ENCODE measurements at regions of chr3 and their contacts with region 1.

Region 1: GRCh38 chr3:11271986-11272904 is at the start of gene ATG7:
- DNase-seq: peak; percentile 94 to 98 (median 97)
- ATAC-seq: peak; percentile 98
- H3K4me3 ChIP-seq: peak within 1 kb of the TSS; percentile 77 to 96
- H3K4me3 Mint-ChIP-seq: peak within 1 kb of the TSS; percentile 96
- H3K27ac ChIP-seq: peak within 1 kb of the TSS; percentile 94 to 97
- H3K27ac Mint-ChIP-seq: peak within 1 kb of the TSS; percentile 99
- H3K4me1 ChIP-seq: peaks cover 23% of the 10 kb centered on the region
- H3K4me1 Mint-ChIP-seq: peaks cover 52% of the 10 kb centered on the region
- H3K27me3 ChIP-seq: no peaks in the 10 kb centered on the region
- H3K27me3 Mint-ChIP-seq: no peaks in the 10 kb centered on the region
- CTCF ChIP-seq: no peak
- total RNA-seq, gene ATG7: 21.3 to 23.8 TPM

Region 2: DNA sequence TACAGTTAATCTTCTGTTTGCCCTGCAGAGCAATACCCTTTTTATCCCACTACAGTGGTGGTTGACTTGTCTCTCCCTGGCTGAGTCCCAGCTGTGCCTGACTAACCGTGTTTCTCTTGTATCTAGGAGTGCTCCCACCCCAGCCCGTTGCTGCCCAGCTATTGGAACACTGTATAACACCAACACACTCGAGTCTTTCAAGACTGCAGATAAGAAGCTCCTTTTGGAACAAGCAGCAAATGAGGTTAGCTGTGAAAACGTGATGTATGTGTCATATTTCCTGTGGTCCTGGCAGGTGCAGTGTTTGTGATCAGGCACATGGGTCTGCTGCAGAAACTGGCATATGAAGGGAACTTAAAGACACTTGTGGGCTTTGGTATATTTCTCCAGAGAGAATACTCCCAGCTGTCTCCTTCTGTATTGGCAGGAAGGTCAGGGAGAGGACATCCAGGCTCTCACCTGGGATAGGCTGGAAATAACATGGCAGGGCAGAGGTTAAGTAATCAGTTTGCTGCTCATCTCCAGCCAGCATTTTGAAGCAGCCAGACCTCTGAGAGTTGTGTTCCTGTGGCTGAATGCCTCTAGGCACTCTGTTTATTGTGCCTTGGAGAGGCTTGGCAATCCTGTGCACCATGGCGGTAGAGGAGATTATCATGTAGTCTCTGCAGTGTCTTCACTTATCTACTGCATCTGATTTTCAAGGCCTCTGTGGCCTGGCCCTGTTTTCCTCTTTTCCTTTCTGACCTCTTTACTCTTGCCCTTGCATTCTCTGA is 34.8 kb after region 1 on chr3:
- CTCF ChIA-PET with region 1: no interaction called
- POLR2A ChIA-PET with region 1: interaction called, 10 read pairs
- intact Hi-C with region 1: loop called in 1 of 2 experiments (anchors 1 kb)
- DNase-seq: peak in 7 of 9 experiments; percentile 16 to 72 (median 41)
- ATAC-seq: peak; percentile 80
- H3K4me3 ChIP-seq: no peak overlapping the region
- H3K4me3 Mint-ChIP-seq: no peak overlapping the region
- H3K27ac ChIP-seq: peak overlapping the region in 1 of 2 experiments; percentile 55
- H3K27ac Mint-ChIP-seq: peak overlapping the region; percentile 66
- H3K4me1 ChIP-seq: peaks cover 7% of the 10 kb centered on the region
- H3K4me1 Mint-ChIP-seq: peaks cover 21% of the 10 kb centered on the region
- H3K27me3 ChIP-seq: no peaks in the 10 kb centered on the region
- H3K27me3 Mint-ChIP-seq: no peaks in the 10 kb centered on the region
- CTCF ChIP-seq: no peak

Region 3: DNA sequence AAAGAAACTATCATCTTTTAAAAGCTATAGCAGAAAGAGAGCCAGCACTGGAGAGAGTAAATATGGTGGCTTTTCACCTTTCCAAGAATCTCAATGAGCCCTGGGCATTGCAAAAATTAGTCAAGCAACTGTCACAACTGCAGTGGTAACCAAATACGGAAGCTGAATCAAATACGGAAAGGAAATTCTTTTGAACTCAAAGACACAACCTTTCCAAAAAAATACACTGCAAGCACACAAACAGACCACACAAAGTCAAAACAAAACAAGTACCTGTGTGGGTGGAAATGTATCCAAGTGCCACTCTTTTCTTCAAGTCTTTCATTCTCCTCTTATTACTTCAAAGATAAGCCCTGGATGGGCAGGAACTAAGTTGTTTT is 353.8 kb after region 1 on chr3:
- CTCF ChIA-PET with region 1: no interaction called
- POLR2A ChIA-PET with region 1: no interaction called
- intact Hi-C with region 1: no loop called
- DNase-seq: no peak
- ATAC-seq: no peak
- H3K4me3 ChIP-seq: no peak overlapping the region
- H3K4me3 Mint-ChIP-seq: no peak overlapping the region
- H3K27ac ChIP-seq: no peak overlapping the region
- H3K27ac Mint-ChIP-seq: peak overlapping the region; percentile 14
- H3K4me1 ChIP-seq: peaks cover 41% of the 10 kb centered on the region
- H3K4me1 Mint-ChIP-seq: peaks cover 58% of the 10 kb centered on the region
- H3K27me3 ChIP-seq: no peaks in the 10 kb centered on the region
- H3K27me3 Mint-ChIP-seq: no peaks in the 10 kb centered on the region
- CTCF ChIP-seq: no peak

Region 4: GRCh38 chr3:11719406-11720230 is 447.4 kb after region 1 on chr3:
- CTCF ChIA-PET with region 1: no interaction called
- POLR2A ChIA-PET with region 1: no interaction called
- intact Hi-C with region 1: loop called in 1 of 2 experiments (anchors 1 kb)
- DNase-seq: peak; percentile 54 to 86 (median 79)
- ATAC-seq: peak; percentile 81
- H3K4me3 ChIP-seq: peak overlapping the region; percentile 68 to 73
- H3K4me3 Mint-ChIP-seq: peak overlapping the region; percentile 88
- H3K27ac ChIP-seq: peak overlapping the region in 1 of 2 experiments; percentile 56
- H3K27ac Mint-ChIP-seq: no peak overlapping the region
- H3K4me1 ChIP-seq: peaks cover 15% of the 10 kb centered on the region
- H3K4me1 Mint-ChIP-seq: peaks cover 24% of the 10 kb centered on the region
- H3K27me3 ChIP-seq: no peaks in the 10 kb centered on the region
- H3K27me3 Mint-ChIP-seq: peaks cover 8% of the 10 kb centered on the region
- CTCF ChIP-seq: no peak

Region 5: DNA sequence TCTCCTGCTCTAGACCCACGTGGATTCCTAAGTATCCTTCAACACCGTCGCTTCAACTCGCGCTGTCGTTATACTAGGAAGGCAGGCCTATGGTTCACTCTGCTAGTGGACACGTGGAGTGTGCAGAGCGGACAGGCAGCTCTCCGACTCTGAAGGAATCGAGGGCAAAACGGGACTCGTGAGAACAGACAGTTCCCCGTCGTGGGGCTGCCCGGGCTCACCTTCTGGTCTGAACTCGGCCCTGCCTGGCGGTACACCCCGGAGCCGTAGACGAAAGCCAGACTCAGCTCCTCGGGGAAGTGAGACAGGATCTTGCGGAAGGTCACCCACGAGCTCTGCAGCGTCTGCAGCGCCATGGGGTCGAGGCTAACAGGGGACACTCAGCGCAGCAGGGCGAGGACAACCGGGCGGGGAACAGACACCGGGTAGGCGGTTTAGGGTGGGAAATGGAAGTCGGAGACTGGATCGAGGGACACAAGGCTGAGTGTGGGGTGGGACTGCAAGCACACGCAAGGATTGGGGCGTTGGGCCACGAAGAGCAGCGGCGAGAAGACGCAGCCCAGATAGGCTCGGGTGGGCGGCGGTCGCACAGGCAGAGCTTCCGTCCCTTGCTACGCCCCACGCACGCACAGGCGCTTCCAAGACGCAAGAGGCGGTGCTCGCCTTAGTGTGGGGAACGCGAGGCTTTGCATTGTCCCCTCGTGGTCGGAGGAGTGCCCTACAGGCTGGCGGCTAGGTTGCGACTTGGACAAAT is 574.2 kb after region 1 on chr3 and contains the start of gene TAMM41:
- CTCF ChIA-PET with region 1: no interaction called
- POLR2A ChIA-PET with region 1: interaction called, 3 read pairs
- intact Hi-C with region 1: loop called (anchors 1 to 5 kb)
- DNase-seq: peak; percentile 77 to 94 (median 89)
- ATAC-seq: peak; percentile 99
- H3K4me3 ChIP-seq: peak within 1 kb of the TSS; percentile 91 to 92
- H3K4me3 Mint-ChIP-seq: peak within 1 kb of the TSS; percentile 99
- H3K27ac ChIP-seq: peak within 1 kb of the TSS; percentile 80 to 88
- H3K27ac Mint-ChIP-seq: peak within 1 kb of the TSS; percentile 97
- H3K4me1 ChIP-seq: peaks cover 28% of the 10 kb centered on the region
- H3K4me1 Mint-ChIP-seq: peaks cover 52% of the 10 kb centered on the region
- H3K27me3 ChIP-seq: no peaks in the 10 kb centered on the region
- H3K27me3 Mint-ChIP-seq: no peaks in the 10 kb centered on the region
- CTCF ChIP-seq: peak; percentile 62
- total RNA-seq, gene TAMM41: 16.2 to 18.5 TPM

Region 6: DNA sequence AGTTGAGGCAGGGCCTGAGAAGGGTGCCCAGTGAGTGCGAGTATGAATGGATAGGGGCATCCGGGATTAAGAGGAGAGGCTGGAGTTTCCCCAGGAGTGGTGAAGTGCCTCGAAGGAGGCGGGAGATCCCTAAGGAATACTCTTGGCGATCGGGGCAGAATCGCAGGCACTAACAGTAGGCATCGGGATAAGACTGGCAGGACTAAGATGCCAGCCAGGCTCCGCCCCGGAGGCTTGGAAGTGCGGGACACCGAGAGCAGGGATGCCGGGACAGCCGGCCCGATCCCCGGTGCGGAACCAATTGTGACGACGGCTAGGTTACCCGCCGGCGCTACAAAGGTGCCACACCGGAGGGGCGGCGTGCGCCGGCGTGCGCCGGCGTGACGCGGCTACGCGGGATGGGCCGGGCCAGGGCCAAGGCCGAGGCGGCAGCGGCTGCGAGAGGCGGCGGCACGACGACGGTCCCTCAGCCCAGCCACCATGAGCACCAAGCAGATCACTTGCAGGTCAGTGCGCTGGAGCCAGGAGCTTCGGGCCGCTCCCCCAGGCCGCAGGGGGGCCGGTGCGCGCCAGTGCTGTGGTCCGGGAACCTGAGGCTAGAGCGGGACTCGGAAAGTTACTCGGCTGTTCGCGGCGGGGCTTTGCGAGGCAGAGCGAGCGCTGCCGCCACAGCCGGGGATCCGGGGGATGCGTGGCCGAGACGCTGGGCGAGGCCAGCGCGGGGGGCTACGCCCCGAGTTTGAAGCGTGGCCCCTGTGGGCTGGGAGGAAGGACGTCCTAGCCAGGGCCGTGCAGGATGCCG is 1284.6 kb after region 1 on chr3 and contains the start of gene MKRN2:
- CTCF ChIA-PET with region 1: no interaction called
- POLR2A ChIA-PET with region 1: no interaction called
- intact Hi-C with region 1: loop called in 1 of 2 experiments (anchors 10 kb)
- DNase-seq: peak; percentile 67 to 94 (median 83)
- ATAC-seq: peak; percentile 93
- H3K4me3 ChIP-seq: peak within 1 kb of the TSS; percentile 73 to 86
- H3K4me3 Mint-ChIP-seq: peak within 1 kb of the TSS; percentile 89
- H3K27ac ChIP-seq: peak within 1 kb of the TSS; percentile 86 to 92
- H3K27ac Mint-ChIP-seq: peak within 1 kb of the TSS; percentile 90
- H3K4me1 ChIP-seq: peaks cover 49% of the 10 kb centered on the region
- H3K4me1 Mint-ChIP-seq: peaks cover 60% of the 10 kb centered on the region
- H3K27me3 ChIP-seq: peaks cover 6 to 16% of the 10 kb centered on the region in 2 experiments
- H3K27me3 Mint-ChIP-seq: peaks cover 24% of the 10 kb centered on the region
- CTCF ChIP-seq: no peak
- total RNA-seq, gene MKRN2: 24.8 to 25.5 TPM